Heart left ventricle (tissue), 16 donors: ENCODE measurements at regions of chr17 and their contacts with region 1.

Region 1: GRCh38 chr17:5237541-5238016 is 2.9 kb upstream of the SCIMP start:
- DNase-seq: peak in 4 of 5 donors; percentile 36 to 51 (median 36)
- ATAC-seq: peak in 3 of 4 donors; percentile 47 to 60 (median 51)
- H3K4me3 ChIP-seq: no peak overlapping the region
- H3K27ac ChIP-seq: peak overlapping the region in 1 of 12 donors; percentile 55
- H3K4me1 ChIP-seq: peaks cover 0 to 29% (median 3%) of the 10 kb centered on the region in 12 donors
- H3K27me3 ChIP-seq: no peaks in the 10 kb centered on the region
- CTCF ChIP-seq: peak; percentile 28 to 73 (median 44)
- POLR2A ChIP-seq: no peak

Region 2: DNA sequence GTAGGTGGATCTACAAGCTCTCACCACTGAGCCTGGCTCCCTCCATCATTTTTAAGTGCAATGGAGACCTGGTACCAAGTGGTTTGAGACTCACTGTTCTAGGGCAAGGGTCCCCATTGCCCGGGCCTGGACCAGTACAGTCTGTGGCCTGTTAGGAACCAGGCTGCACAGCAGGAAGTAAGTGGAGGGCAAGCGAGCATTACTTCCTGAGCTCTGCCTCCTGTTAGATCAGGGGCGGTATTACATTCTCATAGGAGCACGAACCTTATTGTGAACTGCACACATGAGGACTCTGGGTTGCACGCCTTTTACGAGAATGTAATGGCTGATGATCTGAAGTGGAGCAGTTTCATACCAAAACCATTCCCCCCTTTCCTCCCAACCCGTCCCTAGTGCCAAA is 39.1 kb before region 1 on chr17:
- intact Hi-C with region 1: loop called in 1 of 10 experiments (anchors 5 kb)
- DNase-seq: no peak
- ATAC-seq: no peak
- H3K4me3 ChIP-seq: no peak overlapping the region
- H3K27ac ChIP-seq: no peak overlapping the region
- H3K4me1 ChIP-seq: peaks cover 0 to 5% (median 0%) of the 10 kb centered on the region in 12 donors
- H3K27me3 ChIP-seq: no peaks in the 10 kb centered on the region
- CTCF ChIP-seq: no peak
- POLR2A ChIP-seq: no peak